Mammary epithelial cell (primary cell): ENCODE measurements at regions of chr15 and their contacts with region 1.

Region 1: DNA sequence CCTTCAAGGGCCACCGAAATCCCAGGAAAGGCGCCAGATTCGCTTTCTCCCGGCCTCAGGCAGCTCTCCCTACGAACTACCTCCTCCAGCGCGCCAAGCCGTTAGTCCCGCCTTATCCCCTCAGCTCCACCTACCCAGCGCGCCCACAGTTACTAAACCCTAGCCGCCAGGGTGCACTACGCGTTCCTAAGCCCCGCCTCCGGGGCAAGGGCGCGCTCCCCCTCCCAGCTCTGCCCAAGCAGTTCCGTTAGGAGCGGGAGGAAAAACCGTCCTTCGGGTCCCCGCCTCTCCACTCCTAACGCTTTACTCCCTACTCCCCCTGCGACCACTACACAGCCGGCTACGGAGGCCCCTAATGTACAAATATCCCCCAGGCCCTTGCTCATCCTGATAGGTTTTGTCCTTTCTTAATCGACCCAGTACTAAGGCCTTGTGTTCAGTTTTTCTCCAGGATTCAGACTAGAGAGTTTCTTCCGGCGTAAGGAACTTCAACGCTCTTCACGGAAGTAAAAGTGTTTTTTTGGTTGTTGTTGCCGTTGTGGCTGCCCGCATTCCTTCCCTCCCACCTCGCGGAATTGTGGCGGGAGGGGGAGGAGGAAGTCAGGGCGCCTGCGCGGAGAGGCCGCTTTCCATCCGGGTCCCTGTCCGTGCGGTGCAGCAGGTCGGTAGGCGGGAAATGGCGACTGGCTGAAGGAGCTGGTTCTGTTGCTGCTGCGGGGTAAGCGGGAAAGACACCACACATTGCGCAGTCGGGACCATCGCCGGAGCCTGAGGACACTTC is at the start of gene CTDSPL2:
- DNase-seq: peak; percentile 98
- H3K4me3 ChIP-seq: peak within 1 kb of the TSS; percentile 75 to 94 (median 88)
- H3K27ac ChIP-seq: peak within 1 kb of the TSS; percentile 98
- H3K4me1 ChIP-seq: no peaks in the 10 kb centered on the region
- H3K27me3 ChIP-seq: no peaks in the 10 kb centered on the region
- CTCF ChIP-seq: peak in 1 of 2 donors; percentile 44
- total RNA-seq, gene CTDSPL2: 38.0 to 47.3 TPM

Region 2: DNA sequence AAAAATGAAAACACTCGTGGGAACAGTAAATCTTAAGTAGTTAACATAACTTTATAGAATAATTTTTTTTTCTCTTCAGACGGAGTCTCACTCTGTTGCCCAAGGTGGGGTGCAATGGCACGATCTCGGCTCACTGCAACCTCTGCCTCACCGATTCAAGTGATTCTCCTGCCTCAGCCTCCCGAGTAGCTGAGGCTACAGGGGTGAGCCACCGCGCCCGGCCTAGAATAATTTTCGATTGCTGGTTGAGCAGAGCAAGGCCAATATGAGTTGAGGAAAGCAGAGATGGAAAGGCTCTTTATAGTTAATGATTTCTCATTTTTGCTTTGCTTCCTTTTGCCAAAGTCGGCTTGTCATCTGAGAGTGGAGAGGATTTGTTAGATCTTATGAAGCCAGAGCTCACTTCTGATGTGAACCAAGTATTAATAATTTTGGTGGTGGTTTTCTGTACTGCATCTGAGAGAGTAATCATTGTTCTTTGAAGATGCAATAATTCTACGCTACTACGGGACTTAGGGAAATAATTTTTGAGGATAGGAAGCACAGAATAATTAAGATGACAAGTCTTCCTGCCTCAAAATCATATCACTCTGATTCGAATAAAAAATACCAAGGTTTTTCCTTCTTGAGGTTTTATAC is 140.2 kb before region 1 on chr15:
- CTCF ChIA-PET with region 1: no interaction called
- dilution Hi-C with region 1: no loop called
- in situ Hi-C with region 1: no loop called
- intact Hi-C with region 1: loop called (anchors 1 kb)
- DNase-seq: peak; percentile 9
- H3K4me3 ChIP-seq: peak overlapping the region in 2 of 3 experiments; percentile 81 to 90
- H3K27ac ChIP-seq: peak overlapping the region; percentile 97
- H3K4me1 ChIP-seq: peaks cover 4% of the 10 kb centered on the region
- H3K27me3 ChIP-seq: no peaks in the 10 kb centered on the region
- CTCF ChIP-seq: peak; percentile 4 to 17

Region 3: DNA sequence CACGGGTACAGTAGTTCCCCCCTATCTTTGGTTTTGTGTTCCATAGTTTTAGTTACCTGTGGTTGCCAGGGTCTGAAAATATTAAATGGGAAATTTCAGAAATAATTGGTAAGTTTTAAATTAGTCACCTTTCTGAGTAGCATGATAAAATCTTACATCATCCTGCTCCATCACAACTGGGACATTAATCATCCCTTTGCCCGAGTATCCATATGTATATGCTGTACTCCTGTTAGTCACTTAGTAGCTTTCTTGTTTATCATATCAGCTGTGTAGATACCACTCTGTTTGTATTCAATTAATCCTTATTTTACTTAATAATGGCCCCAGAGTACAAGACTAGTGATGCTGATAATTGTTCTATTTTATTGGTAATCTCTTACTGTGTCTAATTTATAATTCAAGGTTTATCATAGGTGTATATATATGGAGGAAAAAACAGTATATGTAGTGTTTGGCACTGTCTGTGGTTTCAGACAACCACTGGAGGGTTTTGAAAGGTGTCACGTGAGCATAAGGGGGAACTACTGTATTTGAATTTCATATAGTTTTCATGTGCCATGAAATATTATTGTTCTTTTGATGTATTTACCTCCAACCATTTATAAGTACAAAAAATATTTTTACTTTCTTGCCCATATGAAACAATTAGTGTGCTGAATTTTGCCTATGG is 41.7 kb after region 1 on chr15:
- CTCF ChIA-PET with region 1: no interaction called
- dilution Hi-C with region 1: no loop called
- in situ Hi-C with region 1: no loop called
- intact Hi-C with region 1: loop called (anchors 5 kb)
- DNase-seq: peak; percentile 84
- H3K4me3 ChIP-seq: no peak overlapping the region
- H3K27ac ChIP-seq: peak overlapping the region; percentile 95
- H3K4me1 ChIP-seq: no peaks in the 10 kb centered on the region
- H3K27me3 ChIP-seq: no peaks in the 10 kb centered on the region
- CTCF ChIP-seq: no peak

Region 4: GRCh38 chr15:44489464-44489863 is 62.3 kb after region 1 on chr15:
- CTCF ChIA-PET with region 1: no interaction called
- dilution Hi-C with region 1: loop called (anchors 10 kb)
- in situ Hi-C with region 1: no loop called
- intact Hi-C with region 1: loop called (anchors 5 kb)
- DNase-seq: peak; percentile 77
- H3K4me3 ChIP-seq: no peak overlapping the region
- H3K27ac ChIP-seq: no peak overlapping the region
- H3K4me1 ChIP-seq: peaks cover 8% of the 10 kb centered on the region
- H3K27me3 ChIP-seq: no peaks in the 10 kb centered on the region
- CTCF ChIP-seq: no peak